ENCODE measurements at regions of chr4 and their contacts with region 1.

Region 1: DNA sequence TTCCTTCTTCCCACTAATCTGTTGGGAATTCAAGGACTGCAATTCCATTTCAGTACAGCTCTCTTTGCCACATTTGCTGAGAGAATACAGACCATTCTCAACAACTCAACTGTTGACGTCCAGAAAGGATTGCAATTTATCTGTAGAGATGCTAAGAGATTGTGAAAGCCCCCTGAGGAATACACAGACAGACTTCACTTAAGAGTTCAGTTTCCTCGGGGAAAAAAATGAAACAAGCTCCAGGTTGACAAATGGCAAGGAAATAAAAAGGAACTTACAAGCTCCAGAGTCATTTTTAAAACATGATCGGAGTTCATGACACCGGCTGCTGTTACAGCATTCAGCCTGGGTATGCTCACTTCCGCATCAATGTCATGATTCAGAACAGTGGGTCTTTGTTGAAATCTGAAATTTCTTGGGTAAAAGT is 13.8 kb downstream of the TLR10 start:
- DNase-seq: no peak
- ATAC-seq: no peak
- H3K4me3 Mint-ChIP-seq: no peak overlapping the region
- H3K27ac Mint-ChIP-seq: no peak overlapping the region
- H3K4me1 Mint-ChIP-seq: no peaks in the 10 kb centered on the region
- H3K27me3 Mint-ChIP-seq: peaks cover 14% of the 10 kb centered on the region

Region 2: GRCh38 chr4:38752941-38753806 is 15.8 kb before region 1 on chr4:
- CTCF ChIA-PET with region 1: no interaction called
- POLR2A ChIA-PET with region 1: no interaction called
- DNase-seq: no peak
- ATAC-seq: peak; percentile 59
- H3K4me3 Mint-ChIP-seq: no peak overlapping the region
- H3K27ac Mint-ChIP-seq: no peak overlapping the region
- H3K4me1 Mint-ChIP-seq: peaks cover 3% of the 10 kb centered on the region
- H3K27me3 Mint-ChIP-seq: no peaks in the 10 kb centered on the region

Region 3: DNA sequence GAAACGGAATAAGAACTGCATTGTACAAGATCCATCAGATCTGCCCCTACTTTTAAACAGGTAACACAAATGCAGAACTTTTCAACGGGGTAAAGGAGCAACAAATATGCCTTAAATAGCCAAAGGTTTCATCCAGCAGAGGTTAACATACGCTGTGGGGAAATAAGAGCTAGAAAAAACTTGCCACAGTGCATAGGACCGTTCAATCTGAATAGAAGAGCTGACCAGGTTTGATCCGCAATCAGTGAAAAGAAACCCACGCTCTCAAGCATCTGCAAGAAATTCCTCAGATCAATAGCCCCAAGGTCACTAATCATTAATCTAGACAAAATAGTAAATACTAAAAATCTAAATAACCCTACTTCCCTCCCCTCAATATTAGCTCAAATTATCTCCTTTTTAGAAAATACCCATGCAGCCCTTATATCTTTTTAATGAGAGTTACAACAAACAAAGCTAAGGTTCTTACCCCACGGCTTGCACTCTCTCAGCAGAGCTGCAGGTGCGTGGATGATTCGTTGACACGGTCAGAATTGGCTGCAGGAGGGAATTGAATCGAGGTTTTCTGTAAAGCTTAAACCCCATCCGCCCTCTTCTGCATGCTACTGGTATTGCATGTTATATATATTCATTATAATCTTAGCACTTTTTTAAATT is 13.6 kb after region 1 on chr4 and contains the start of gene TLR10:
- CTCF ChIA-PET with region 1: interaction called, 18 read pairs
- POLR2A ChIA-PET with region 1: no interaction called
- DNase-seq: peak; percentile 64
- ATAC-seq: peak; percentile 47
- H3K4me3 Mint-ChIP-seq: no peak within 1 kb of the TSS
- H3K27ac Mint-ChIP-seq: no peak within 1 kb of the TSS
- H3K4me1 Mint-ChIP-seq: peaks cover 6% of the 10 kb centered on the region
- H3K27me3 Mint-ChIP-seq: peaks cover 5% of the 10 kb centered on the region
- total RNA-seq, gene TLR10: 0.08 TPM in 1 of 2 experiments, not detected in the other

Region 4: DNA sequence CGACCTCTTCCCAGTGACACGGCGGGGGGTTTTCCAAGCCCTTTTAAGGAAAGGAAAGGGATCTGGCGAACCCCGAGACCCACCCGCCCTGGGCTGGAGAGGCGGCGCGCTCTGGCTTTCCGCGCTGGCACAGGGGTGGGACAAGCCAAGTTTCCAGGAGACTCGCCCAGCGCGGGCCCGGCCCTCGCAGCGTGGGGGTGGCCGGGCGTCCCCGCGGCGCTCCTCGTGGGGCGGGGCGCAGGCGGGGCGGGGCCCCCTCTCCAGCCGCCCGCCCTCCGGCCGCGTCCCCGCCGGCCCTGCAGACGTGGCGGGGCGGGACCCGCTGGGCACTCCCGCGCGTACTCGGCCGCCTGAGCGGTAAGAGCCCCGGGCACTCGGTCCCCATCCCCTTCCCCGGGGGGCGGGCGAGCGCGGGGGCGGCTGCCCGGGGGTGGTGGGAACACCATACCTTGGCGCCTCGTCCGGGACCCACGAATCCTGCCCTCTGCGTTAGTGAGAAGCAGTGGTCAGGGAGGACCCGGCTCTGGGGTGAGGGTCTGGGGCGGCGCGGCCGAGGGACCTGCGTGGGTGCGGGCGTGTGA is 98.6 kb after region 1 on chr4 and contains the start of gene FAM114A1:
- CTCF ChIA-PET with region 1: no interaction called
- POLR2A ChIA-PET with region 1: no interaction called
- DNase-seq: peak; percentile 31
- ATAC-seq: peak; percentile 93
- H3K4me3 Mint-ChIP-seq: peak within 1 kb of the TSS; percentile 76
- H3K27ac Mint-ChIP-seq: peak within 1 kb of the TSS; percentile 51
- H3K4me1 Mint-ChIP-seq: peaks cover 26% of the 10 kb centered on the region
- H3K27me3 Mint-ChIP-seq: peaks cover 39% of the 10 kb centered on the region
- total RNA-seq, gene FAM114A1: 0.50 to 0.60 TPM